ENCODE measurements at regions of chr1 and their contacts with region 1.

Region 1: GRCh38 chr1:204565617-204566582 is 49.7 kb downstream of the MDM4 start:
- DNase-seq: peak; percentile 80
- CTCF ChIP-seq: peak; percentile 61

Region 2: GRCh38 chr1:204544321-204544720 is 21.6 kb before region 1 on chr1:
- CTCF ChIA-PET with region 1: interaction called, 10 read pairs
- POLR2A ChIA-PET with region 1: no interaction called
- DNase-seq: no peak
- CTCF ChIP-seq: no peak

Region 3: DNA sequence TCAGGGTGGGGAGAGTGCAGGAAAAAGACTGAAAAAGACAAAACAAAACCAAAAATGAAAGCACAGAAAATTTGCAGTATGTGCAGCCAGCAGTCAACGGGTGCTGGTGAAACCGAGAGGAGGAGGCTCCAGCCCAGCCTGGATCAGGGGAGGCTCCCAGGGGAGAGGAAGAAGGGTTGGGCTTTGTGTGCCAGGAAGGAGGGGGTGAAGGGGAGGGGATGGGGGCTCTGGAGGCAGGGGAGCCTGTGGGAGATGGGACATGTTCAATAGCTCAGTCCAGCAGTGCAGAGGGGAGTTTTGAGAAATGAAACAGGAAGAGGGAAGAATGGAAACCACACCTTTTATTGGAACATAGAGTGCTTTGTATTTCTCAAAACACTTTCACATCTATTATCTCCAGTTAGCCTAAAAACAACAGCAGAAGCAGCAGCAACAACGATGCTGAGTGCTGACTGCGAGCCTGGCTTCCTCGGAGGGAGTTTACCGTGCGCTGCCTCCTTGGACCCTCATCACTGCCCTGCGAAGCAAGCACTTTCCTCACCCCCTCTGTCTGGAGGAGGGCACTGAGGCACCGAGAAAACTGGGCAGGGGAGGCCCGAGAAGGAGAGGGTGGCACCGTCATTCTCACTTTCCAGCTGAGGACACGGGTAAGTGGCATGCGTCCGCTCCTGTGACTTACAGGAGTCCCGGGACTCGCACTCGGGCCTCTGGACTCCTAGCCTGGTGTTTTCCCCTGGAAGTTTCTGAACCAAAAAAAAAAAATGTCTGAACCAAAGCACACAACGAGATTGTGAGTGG is 13.2 kb after region 1 on chr1:
- CTCF ChIA-PET with region 1: interaction called, 19 read pairs
- POLR2A ChIA-PET with region 1: interaction called, 3 read pairs
- DNase-seq: peak; percentile 74
- CTCF ChIP-seq: no peak

Region 4: DNA sequence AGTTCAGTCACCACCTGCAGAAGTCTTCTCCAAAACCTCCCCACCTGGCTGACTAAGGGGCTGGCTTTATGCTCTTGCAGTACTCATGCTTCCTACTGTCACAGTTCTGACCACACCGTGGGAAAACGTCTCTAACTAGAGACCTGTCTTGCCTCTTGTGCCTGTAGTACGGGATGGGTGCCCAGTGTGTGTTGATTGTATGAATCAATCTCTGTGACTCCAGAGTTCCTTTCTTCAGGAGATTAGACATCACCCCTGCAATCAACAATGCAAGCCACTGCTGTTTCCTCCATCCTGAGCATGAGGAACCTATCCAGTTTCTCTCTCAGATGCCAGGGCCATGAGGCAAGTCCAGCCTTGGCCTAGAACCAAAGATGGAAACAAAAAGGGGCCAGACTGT is 55.5 kb after region 1 on chr1:
- CTCF ChIA-PET with region 1: no interaction called
- POLR2A ChIA-PET with region 1: no interaction called
- DNase-seq: no peak
- CTCF ChIP-seq: no peak

Measured in GM10248 (cell line).